Activated CD4-positive, alpha-beta memory T cell treated with anti-CD3 and anti-CD28 coated beads for 36 hours (primary cell): ENCODE measurements at regions of chr9 and their contacts with region 1.

Region 1: GRCh38 chr9:87336914-87337333 is 160.7 kb upstream of the DAPK1 start:
- DNase-seq: peak; percentile 29
- H3K4me3 Mint-ChIP-seq: peak overlapping the region; percentile 64
- H3K27ac Mint-ChIP-seq: no peak overlapping the region
- H3K4me1 Mint-ChIP-seq: peaks cover 13% of the 10 kb centered on the region
- H3K27me3 Mint-ChIP-seq: peaks cover 39% of the 10 kb centered on the region

Region 2: DNA sequence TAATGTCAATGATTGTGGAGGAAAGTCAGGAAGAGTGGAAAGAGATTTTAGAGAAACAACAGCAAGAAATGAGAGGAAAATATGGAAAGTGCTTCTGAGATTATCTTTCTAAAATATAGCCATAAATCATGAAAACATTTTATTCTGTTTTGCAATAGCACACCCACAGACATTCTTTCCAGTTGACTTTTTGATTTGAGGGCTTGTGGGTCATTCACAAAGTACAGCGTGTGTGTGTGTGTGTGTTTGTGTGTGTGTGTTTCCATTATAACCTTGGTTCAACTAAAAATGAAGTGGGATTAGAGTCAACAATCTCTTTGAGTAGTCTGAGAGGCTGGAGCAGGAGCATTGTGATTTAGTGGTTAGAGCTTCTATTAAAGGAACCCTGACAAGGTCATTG is 273.1 kb before region 1 on chr9:
- CTCF ChIA-PET with region 1: no interaction called
- POLR2A ChIA-PET with region 1: no interaction called
- intact Hi-C with region 1: no loop called
- DNase-seq: no peak
- H3K4me3 Mint-ChIP-seq: no peak overlapping the region
- H3K27ac Mint-ChIP-seq: no peak overlapping the region
- H3K4me1 Mint-ChIP-seq: no peaks in the 10 kb centered on the region
- H3K27me3 Mint-ChIP-seq: peaks cover 13% of the 10 kb centered on the region

Region 3: GRCh38 chr9:87354147-87354546 is 17.2 kb after region 1 on chr9:
- CTCF ChIA-PET with region 1: no interaction called
- POLR2A ChIA-PET with region 1: no interaction called
- intact Hi-C with region 1: no loop called
- DNase-seq: no peak
- H3K4me3 Mint-ChIP-seq: no peak overlapping the region
- H3K27ac Mint-ChIP-seq: no peak overlapping the region
- H3K4me1 Mint-ChIP-seq: no peaks in the 10 kb centered on the region
- H3K27me3 Mint-ChIP-seq: peaks cover 11% of the 10 kb centered on the region

Region 4: DNA sequence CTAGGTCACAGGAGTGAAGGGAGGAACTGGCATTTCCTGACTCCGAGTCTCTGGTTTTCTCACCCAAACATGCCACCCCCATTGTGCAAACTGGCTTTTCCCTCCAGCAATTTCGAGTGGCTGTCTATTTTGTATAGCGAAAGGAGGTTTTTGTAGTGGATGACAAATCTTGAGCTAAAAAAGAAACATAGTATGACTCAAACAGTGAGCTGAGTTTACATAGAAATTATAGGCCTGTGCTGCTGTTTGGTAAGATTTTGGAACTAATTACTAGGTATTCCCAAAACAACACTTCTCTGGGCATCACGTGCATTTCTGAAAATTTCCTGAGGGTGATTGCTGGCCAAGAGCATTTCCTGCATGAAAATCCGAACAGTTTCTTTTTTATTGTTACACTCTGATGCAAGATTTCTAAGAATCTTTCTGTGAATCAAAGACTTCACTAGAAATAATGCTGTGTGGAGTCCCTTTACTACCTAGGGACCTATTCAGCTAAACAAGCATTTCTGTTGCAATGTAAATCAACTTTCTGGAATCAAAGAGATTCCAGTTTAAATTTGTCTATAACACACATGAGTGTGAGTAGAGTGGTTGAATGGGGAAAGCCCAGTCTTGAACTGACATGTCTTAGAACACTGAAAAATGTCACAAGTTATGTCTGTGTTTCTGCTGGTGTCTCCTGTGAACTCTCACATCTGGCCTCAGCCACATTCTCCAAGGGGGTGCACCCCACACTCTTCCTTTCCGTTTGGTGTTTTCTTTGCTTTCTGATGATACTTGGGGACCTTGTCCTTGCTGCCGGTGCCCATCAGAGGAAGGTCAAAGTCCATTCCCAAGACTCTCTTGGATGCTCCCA is 127.4 kb after region 1 on chr9:
- CTCF ChIA-PET with region 1: interaction called, 3 read pairs
- POLR2A ChIA-PET with region 1: no interaction called
- intact Hi-C with region 1: loop called (anchors 1 kb)
- DNase-seq: peak; percentile 64
- H3K4me3 Mint-ChIP-seq: no peak overlapping the region
- H3K27ac Mint-ChIP-seq: peak overlapping the region; percentile 75
- H3K4me1 Mint-ChIP-seq: peaks cover 16% of the 10 kb centered on the region
- H3K27me3 Mint-ChIP-seq: no peaks in the 10 kb centered on the region

Region 5: DNA sequence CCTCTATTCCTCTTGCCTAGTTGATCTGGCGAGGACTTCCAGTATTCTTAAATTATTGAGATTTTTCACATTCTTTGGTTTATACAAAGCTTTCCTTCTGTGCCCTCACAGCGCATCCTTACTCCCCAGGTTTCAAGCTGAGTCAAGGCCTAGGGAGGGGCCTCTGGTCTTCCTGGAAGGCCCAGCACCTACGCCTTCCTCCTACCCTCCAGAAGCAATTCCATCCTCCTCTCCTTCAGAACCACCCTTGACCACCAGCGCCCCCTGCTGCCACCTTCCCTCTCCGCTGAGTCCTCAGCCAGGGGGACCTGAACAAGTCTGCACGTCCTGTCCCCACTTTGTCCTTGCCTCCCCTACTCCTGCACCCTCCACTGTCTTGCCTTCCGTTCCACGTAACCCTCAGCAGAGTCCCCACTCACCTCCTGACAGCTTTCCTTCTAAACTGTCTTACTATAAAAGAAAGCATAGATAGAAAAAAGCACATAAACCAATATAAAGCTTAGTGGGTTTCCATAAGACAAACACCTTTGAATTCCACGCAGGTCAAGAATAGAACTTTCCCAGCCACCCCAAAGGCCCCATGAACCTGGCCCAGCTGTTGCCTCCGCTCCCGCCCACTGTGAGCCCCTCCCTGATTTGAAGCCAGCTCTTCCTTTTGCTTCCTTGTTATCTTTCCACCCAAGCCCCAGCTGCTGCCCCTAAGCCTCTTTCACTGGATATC is 326.0 kb after region 1 on chr9:
- CTCF ChIA-PET with region 1: interaction called, 22 read pairs
- POLR2A ChIA-PET with region 1: no interaction called
- intact Hi-C with region 1: loop called (anchors 1 kb)
- DNase-seq: peak; percentile 79
- H3K4me3 Mint-ChIP-seq: no peak overlapping the region
- H3K27ac Mint-ChIP-seq: no peak overlapping the region
- H3K4me1 Mint-ChIP-seq: peaks cover 2% of the 10 kb centered on the region
- H3K27me3 Mint-ChIP-seq: peaks cover 10% of the 10 kb centered on the region